Common myeloid progenitor, CD34-positive (primary cell): ENCODE measurements at regions of chr1 and their contacts with region 1.

Region 1: DNA sequence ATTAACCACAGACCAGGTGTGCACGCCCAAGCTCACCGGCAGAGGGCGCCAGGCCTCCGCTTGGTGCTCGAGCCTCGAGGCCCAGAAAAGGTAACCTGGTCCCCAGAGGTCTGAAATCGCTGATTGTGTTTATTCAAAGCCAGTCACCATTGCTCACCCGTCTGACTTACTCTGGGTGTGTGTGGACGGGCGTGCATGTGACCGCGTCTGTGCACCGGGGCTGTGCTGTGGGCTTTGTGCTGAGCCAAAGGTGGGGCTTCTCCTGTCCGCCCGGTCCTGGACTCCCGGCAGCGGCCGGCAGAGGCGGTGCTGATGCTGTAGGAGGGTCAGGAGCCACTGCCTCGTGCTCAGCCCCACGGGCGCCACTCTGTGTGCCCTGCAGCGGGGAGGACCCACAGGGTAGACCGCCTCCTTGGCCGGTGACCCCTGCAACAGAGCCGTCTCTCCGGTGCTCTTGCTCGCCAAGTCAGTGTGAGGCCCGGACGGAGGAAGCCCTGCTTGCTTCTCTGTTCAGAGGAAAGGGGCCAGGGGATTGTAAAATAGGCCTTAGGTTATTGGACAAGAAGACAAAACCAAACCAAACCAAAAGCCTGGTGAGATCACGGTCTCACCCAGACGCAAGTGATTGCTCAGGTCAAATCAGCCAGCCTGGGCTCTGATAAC is 32.0 kb upstream of the BTG2 start:
- DNase-seq: peak; percentile 78 to 89 (median 86)
- H3K4me3 ChIP-seq: peak overlapping the region in 3 of 7 experiments; percentile 38 to 52 (median 46)
- H3K27ac ChIP-seq: no peak overlapping the region
- H3K4me1 ChIP-seq: peaks cover 7 to 52% (median 42%) of the 10 kb centered on the region in 4 experiments
- H3K27me3 ChIP-seq: no peaks in the 10 kb centered on the region

Region 2: GRCh38 chr1:203189951-203190352 is 83.4 kb before region 1 on chr1:
- CTCF ChIA-PET with region 1: no interaction called
- POLR2A ChIA-PET with region 1: no interaction called
- DNase-seq: no peak
- H3K4me3 ChIP-seq: no peak overlapping the region
- H3K27ac ChIP-seq: no peak overlapping the region
- H3K4me1 ChIP-seq: peaks cover 0 to 14% (median 9%) of the 10 kb centered on the region in 4 experiments
- H3K27me3 ChIP-seq: peaks cover 0 to 2% (median 0%) of the 10 kb centered on the region in 5 experiments

Region 3: GRCh38 chr1:203290261-203291089 is 17.1 kb after region 1 on chr1:
- CTCF ChIA-PET with region 1: interaction called, 156 read pairs
- POLR2A ChIA-PET with region 1: interaction called, 5 read pairs
- DNase-seq: peak; percentile 85 to 95 (median 95)
- H3K4me3 ChIP-seq: peak overlapping the region in 3 of 7 experiments; percentile 54 to 58 (median 55)
- H3K27ac ChIP-seq: peak overlapping the region; percentile 81 to 85
- H3K4me1 ChIP-seq: peaks cover 25 to 64% (median 58%) of the 10 kb centered on the region in 4 experiments
- H3K27me3 ChIP-seq: no peaks in the 10 kb centered on the region

Region 4: GRCh38 chr1:203299169-203299568 is 25.8 kb after region 1 on chr1:
- CTCF ChIA-PET with region 1: interaction called, 41 read pairs
- POLR2A ChIA-PET with region 1: interaction called, 5 read pairs
- DNase-seq: no peak
- H3K4me3 ChIP-seq: no peak overlapping the region
- H3K27ac ChIP-seq: no peak overlapping the region
- H3K4me1 ChIP-seq: peaks cover 20 to 58% (median 39%) of the 10 kb centered on the region in 4 experiments
- H3K27me3 ChIP-seq: no peaks in the 10 kb centered on the region

Region 5: DNA sequence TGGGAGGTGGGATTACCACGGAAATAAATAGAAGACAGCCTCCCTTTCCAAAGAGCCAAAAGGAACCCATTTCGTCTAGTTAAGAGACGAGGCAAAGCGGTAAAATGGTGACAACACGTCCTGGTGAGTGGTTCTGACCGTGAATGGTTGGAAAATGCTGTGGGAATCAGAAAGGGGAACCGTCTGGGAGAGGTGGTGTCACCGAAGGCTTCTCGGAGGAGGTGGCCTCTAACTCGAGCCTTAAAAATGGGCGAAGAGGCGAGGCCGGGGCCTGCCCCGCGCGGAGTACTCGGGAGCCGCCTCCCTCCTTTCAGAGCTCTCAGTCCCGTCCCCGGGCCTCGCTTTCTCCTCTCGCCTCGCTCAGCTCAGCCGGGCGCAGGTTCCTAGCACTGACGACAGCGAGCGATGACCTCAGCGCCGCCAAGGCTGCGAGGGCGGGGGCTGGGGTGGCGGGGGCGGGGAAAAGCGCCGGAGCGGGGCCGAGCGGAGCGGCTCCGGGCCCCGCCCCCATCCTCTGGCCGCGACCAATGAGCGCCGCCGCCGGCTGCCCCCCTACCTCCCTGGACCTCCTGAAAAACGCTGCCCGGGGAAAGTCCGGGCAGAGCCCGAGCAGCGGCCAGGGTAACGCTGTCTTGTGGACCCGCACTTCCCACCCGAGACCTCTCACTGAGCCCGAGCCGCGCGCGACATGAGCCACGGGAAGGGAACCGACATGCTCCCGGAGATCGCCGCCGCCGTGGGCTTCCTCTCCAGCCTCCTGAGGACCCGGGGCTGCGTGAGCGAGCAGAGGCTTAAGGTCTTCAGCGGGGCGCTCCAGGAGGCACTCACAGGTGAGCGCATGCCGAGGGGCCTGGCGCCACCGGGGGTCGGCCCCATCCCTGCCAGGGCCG is 31.8 kb after region 1 on chr1 and contains the start of gene BTG2:
- CTCF ChIA-PET with region 1: interaction called, 134 read pairs
- POLR2A ChIA-PET with region 1: interaction called, 44 read pairs
- DNase-seq: peak; percentile 83 to 91 (median 91)
- H3K4me3 ChIP-seq: peak within 1 kb of the TSS; percentile 75 to 98 (median 89)
- H3K27ac ChIP-seq: peak within 1 kb of the TSS; percentile 80 to 91
- H3K4me1 ChIP-seq: peaks cover 34 to 79% (median 62%) of the 10 kb centered on the region in 4 experiments
- H3K27me3 ChIP-seq: no peaks in the 10 kb centered on the region

Region 6: GRCh38 chr1:203320591-203321272 is 47.4 kb after region 1 on chr1:
- CTCF ChIA-PET with region 1: interaction called, 115 read pairs
- POLR2A ChIA-PET with region 1: interaction called, 7 read pairs
- DNase-seq: peak; percentile 95 to 100 (median 99)
- H3K4me3 ChIP-seq: peak overlapping the region in 3 of 7 experiments; percentile 13 to 52 (median 44)
- H3K27ac ChIP-seq: peak overlapping the region; percentile 59 to 85
- H3K4me1 ChIP-seq: peaks cover 33 to 84% (median 73%) of the 10 kb centered on the region in 4 experiments
- H3K27me3 ChIP-seq: no peaks in the 10 kb centered on the region

Region 7: GRCh38 chr1:203326830-203327683 is 53.7 kb after region 1 on chr1:
- CTCF ChIA-PET with region 1: interaction called, 322 read pairs
- POLR2A ChIA-PET with region 1: interaction called, 18 read pairs
- DNase-seq: peak; percentile 94 to 98 (median 98)
- H3K4me3 ChIP-seq: peak overlapping the region in 5 of 7 experiments; percentile 35 to 63 (median 54)
- H3K27ac ChIP-seq: peak overlapping the region; percentile 75 to 88
- H3K4me1 ChIP-seq: peaks cover 32 to 70% (median 59%) of the 10 kb centered on the region in 4 experiments
- H3K27me3 ChIP-seq: no peaks in the 10 kb centered on the region